ENCODE measurements at regions of chr5 and their contacts with region 1.

Region 1: GRCh38 chr5:17180957-17181723 is 36.3 kb upstream of the BASP1 start:
- DNase-seq: peak; percentile 100
- ATAC-seq: peak; percentile 79
- H3K4me3 ChIP-seq: no peak overlapping the region
- H3K27ac ChIP-seq: peak overlapping the region; percentile 92
- H3K4me1 ChIP-seq: peaks cover 33% of the 10 kb centered on the region
- H3K27me3 ChIP-seq: no peaks in the 10 kb centered on the region
- CTCF ChIP-seq: no peak
- POLR2A ChIP-seq: no peak; the same call in 1 of the 2 replicates
- RAD21 ChIP-seq: peak; percentile 41

Region 2: GRCh38 chr5:16916262-16916865 is 264.8 kb before region 1 on chr5:
- CTCF ChIA-PET with region 1: interaction called, 12 read pairs
- POLR2A ChIA-PET with region 1: no interaction called
- dilution Hi-C with region 1: no loop called
- in situ Hi-C with region 1: no loop called
- intact Hi-C with region 1: no loop called
- DNase-seq: peak; percentile 93
- ATAC-seq: peak; percentile 59
- H3K4me3 ChIP-seq: no peak overlapping the region
- H3K27ac ChIP-seq: no peak overlapping the region
- H3K4me1 ChIP-seq: peaks cover 32% of the 10 kb centered on the region
- H3K27me3 ChIP-seq: no peaks in the 10 kb centered on the region
- CTCF ChIP-seq: no peak
- POLR2A ChIP-seq: no peak
- RAD21 ChIP-seq: no peak

Region 3: GRCh38 chr5:17169507-17169906 is 11.6 kb before region 1 on chr5:
- CTCF ChIA-PET with region 1: interaction called, 5 read pairs
- POLR2A ChIA-PET with region 1: interaction called, 3 read pairs
- dilution Hi-C with region 1: no loop called
- in situ Hi-C with region 1: no loop called
- intact Hi-C with region 1: loop called (anchors 1 kb)
- DNase-seq: peak; percentile 92
- ATAC-seq: peak; percentile 80
- H3K4me3 ChIP-seq: no peak overlapping the region
- H3K27ac ChIP-seq: peak overlapping the region; percentile 89; the same call in 1 of the 2 replicates
- H3K4me1 ChIP-seq: peaks cover 26% of the 10 kb centered on the region
- H3K27me3 ChIP-seq: no peaks in the 10 kb centered on the region
- CTCF ChIP-seq: no peak
- POLR2A ChIP-seq: no peak
- RAD21 ChIP-seq: no peak